AG04450 (cell line): ENCODE measurements at regions of chr4 and their contacts with region 1.

Region 1: GRCh38 chr4:83012687-83013419 is 2.2 kb upstream of the LIN54 start:
- DNase-seq: peak; percentile 97
- H3K4me3 ChIP-seq: peak overlapping the region; percentile 73
- H3K27ac ChIP-seq: no peak overlapping the region
- H3K27me3 ChIP-seq: no peaks in the 10 kb centered on the region
- CTCF ChIP-seq: peak; percentile 49

Region 2: GRCh38 chr4:82889287-82889686 is 123.6 kb before region 1 on chr4:
- CTCF ChIA-PET with region 1: no interaction called
- POLR2A ChIA-PET with region 1: interaction called, 11 read pairs
- DNase-seq: no peak
- H3K4me3 ChIP-seq: peak overlapping the region; percentile 90
- H3K27ac ChIP-seq: no peak overlapping the region
- H3K27me3 ChIP-seq: no peaks in the 10 kb centered on the region
- CTCF ChIP-seq: no peak

Region 3: GRCh38 chr4:83034630-83035494 is 22.0 kb after region 1 on chr4 and contains the start of gene COPS4:
- CTCF ChIA-PET with region 1: interaction called, 7 read pairs
- POLR2A ChIA-PET with region 1: interaction called, 33 read pairs
- DNase-seq: peak; percentile 99
- H3K4me3 ChIP-seq: peak within 1 kb of the TSS; percentile 90
- H3K27ac ChIP-seq: peak within 1 kb of the TSS; percentile 92
- H3K27me3 ChIP-seq: peaks cover 6% of the 10 kb centered on the region
- CTCF ChIP-seq: peak; percentile 59
- polyA plus RNA-seq, gene COPS4: 59.0 and 78.4 TPM in 2 replicates